Panc1 (cell line): ENCODE measurements at regions of chr15 and their contacts with region 1.

Region 1: GRCh38 chr15:95059418-95059817 is 828.1 kb downstream of the MCTP2 start:
- DNase-seq: no peak
- ATAC-seq: no peak
- H3K4me3 ChIP-seq: no peak overlapping the region
- H3K27ac ChIP-seq: no peak overlapping the region
- H3K4me1 ChIP-seq: no peaks in the 10 kb centered on the region
- H3K27me3 ChIP-seq: no peaks in the 10 kb centered on the region
- CTCF ChIP-seq: no peak

Region 2: DNA sequence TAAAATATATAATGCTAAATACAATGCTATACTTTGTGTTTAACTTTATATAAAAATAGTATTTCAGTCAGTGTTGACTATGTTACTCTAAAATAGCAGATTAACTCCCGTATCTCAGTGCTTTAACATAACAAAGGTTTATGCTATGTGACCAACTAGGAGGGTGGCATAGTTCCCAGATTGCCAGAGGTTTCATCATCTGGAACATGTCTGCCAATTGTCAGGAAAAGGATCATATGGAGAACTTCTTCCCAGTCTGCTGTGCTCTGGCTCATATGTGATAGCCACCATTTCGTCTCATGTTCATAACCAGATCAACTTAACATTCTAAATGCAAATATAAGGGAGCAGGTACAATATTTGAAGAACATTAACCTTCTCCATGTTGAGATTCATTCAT is 107.9 kb before region 1 on chr15:
- CTCF ChIA-PET with region 1: no interaction called
- POLR2A ChIA-PET with region 1: no interaction called
- in situ Hi-C with region 1: no loop called
- intact Hi-C with region 1: no loop called
- DNase-seq: no peak
- ATAC-seq: no peak
- H3K4me3 ChIP-seq: no peak overlapping the region
- H3K27ac ChIP-seq: no peak overlapping the region
- H3K4me1 ChIP-seq: no peaks in the 10 kb centered on the region
- H3K27me3 ChIP-seq: no peaks in the 10 kb centered on the region
- CTCF ChIP-seq: no peak

Region 3: DNA sequence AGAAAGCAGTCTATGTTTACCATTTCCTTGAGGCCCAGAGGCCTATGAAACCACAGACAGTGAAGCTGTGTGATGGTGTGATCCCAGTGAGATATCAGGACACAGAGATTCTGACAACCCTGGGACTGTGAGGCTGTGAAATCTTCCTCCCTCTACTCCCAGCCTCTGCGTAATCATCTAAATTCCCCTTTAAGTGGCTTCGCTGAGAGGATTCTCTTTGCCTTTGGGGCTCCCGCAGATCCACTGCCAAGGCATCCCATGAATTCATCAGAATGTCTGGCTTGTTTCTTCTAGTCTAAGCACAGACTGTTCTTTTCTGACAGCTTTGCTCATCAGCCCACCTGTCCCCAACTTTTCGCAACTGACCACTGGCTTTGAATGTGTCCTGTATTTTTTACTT is 369.9 kb after region 1 on chr15:
- CTCF ChIA-PET with region 1: no interaction called
- POLR2A ChIA-PET with region 1: interaction called, 13 read pairs
- in situ Hi-C with region 1: no loop called
- intact Hi-C with region 1: no loop called
- DNase-seq: no peak
- ATAC-seq: no peak
- H3K4me3 ChIP-seq: no peak overlapping the region
- H3K27ac ChIP-seq: no peak overlapping the region
- H3K4me1 ChIP-seq: no peaks in the 10 kb centered on the region
- H3K27me3 ChIP-seq: no peaks in the 10 kb centered on the region
- CTCF ChIP-seq: no peak